ENCODE measurements at regions of chr7 and their contacts with region 1.

Region 1: GRCh38 chr7:100126931-100127865 is at the start of gene MBLAC1:
- DNase-seq: peak; percentile 82 to 95
- ATAC-seq: peak; percentile 76 to 83
- H3K4me3 ChIP-seq: peak within 1 kb of the TSS; percentile 64
- H3K27ac ChIP-seq: peak within 1 kb of the TSS; percentile 90 to 94
- H3K4me1 ChIP-seq: peaks cover 30% of the 10 kb centered on the region
- CTCF ChIP-seq: no peak
- EP300 ChIP-seq: no peak
- POLR2A ChIP-seq: peak; percentile 81
- RAD21 ChIP-seq: no peak
- polyA plus RNA-seq, gene MBLAC1: 0.45 and 0.63 TPM in 2 replicates

Region 2: DNA sequence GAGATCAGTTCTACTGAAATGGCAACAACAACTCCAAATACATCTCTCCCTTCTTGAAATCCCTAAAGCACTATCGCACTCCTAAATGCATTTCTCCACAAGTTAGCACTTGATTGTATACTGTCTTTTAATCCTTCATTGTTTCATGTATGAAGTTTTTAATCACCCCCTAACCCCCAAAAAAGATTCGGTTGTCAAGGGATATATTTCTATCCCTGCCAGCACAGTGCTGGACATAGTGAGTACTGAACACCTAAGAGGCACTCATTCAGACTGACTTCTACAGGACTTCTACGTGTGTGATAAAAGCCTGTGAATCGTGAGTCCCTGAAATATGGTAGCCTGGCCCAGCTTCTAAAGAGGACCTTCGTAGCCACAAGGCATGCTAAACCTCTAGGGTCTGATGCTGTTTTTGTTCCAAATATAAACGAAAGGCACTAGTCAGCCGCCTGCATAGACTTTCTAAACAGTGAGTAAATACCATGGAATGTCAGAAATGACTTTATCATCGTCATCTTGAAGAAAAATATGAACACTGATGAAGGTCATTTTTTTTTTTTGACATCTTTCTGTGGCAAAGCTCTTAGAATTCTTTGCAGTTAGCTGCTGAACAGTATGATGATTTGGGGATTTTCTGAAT is 92.2 kb before region 1 on chr7:
- CTCF ChIA-PET with region 1: no interaction called
- POLR2A ChIA-PET with region 1: no interaction called
- DNase-seq: peak in 1 of 2 experiments; percentile 42
- ATAC-seq: peak; percentile 39 to 81; a peak in 5 of 6 replicates
- H3K4me3 ChIP-seq: no peak overlapping the region
- H3K27ac ChIP-seq: peak overlapping the region in 1 of 2 experiments; percentile 48; a peak in 2 of 6 replicates
- H3K4me1 ChIP-seq: peaks cover 9% of the 10 kb centered on the region; the same call in 2 of the 3 replicates
- CTCF ChIP-seq: no peak
- EP300 ChIP-seq: no peak
- POLR2A ChIP-seq: no peak
- RAD21 ChIP-seq: no peak

Region 3: GRCh38 chr7:100148559-100149350 is 21.6 kb after region 1 on chr7 and contains the start of gene LAMTOR4:
- CTCF ChIA-PET with region 1: interaction called, 245 read pairs
- POLR2A ChIA-PET with region 1: interaction called, 16 read pairs
- DNase-seq: peak; percentile 99 to 100
- ATAC-seq: peak; percentile 99
- H3K4me3 ChIP-seq: peak within 1 kb of the TSS; percentile 81
- H3K27ac ChIP-seq: peak within 1 kb of the TSS; percentile 93 to 94
- H3K4me1 ChIP-seq: peaks cover 14% of the 10 kb centered on the region
- CTCF ChIP-seq: no peak
- EP300 ChIP-seq: no peak
- POLR2A ChIP-seq: peak; percentile 82
- RAD21 ChIP-seq: no peak
- polyA plus RNA-seq, gene LAMTOR4: 123 and 152 TPM in 2 replicates